Activated T-helper 2 cell treated with anti-CD3 and anti-CD28 coated beads, Interferon-gamma antibody, Interleukin-2, Interleukin-4, amounts not matched to agents 10 μg/mL and 5 μg/mL and 100 μg/mL, durations not matched to agents 14 hours and 24 hours and 36 hours (primary cell): ENCODE measurements at regions of chr1 and their contacts with region 1.

Region 1: GRCh38 chr1:204541626-204542025 is 25.4 kb downstream of the MDM4 start:
- DNase-seq: no peak
- H3K4me3 Mint-ChIP-seq: no peak overlapping the region
- H3K27ac Mint-ChIP-seq: no peak overlapping the region
- H3K4me1 Mint-ChIP-seq: peaks cover 53% of the 10 kb centered on the region
- H3K27me3 Mint-ChIP-seq: no peaks in the 10 kb centered on the region

Region 2: DNA sequence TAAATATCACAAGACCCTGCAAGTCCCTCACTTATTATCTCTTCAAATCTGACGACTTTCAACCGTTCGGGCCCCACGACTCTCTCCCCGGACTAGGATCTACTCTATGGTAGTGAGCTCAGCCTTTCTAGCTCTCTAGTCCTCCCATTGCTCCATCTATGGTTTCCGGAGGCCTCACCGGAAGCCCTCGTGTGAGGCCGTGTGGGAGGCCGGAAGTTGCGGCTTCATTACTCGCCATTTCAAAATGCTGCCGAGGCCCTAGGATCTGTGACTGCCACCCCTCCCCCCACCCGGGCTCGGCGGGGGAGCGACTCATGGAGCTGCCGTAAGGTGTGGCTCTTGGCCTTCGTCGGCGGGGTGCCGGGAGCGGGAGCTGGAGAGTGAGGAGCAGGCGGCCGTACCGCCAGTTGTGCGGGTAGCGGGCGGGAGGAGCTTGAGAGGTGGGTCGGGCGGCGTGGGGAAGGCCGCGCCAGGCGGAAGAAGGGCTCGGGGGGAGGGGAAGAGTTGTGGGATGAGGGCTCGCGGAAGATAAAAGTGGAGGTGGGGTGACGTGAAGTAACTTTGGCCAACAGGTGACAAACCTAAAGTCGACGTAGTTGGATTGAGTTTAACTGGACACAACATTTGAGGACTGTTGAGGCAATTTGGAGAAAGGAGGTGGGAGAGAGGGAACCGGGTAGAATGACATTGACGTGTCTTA is 25.3 kb before region 1 on chr1 and contains the start of gene MDM4:
- intact Hi-C with region 1: loop called (anchors 2 kb)
- DNase-seq: peak; percentile 91
- H3K4me3 Mint-ChIP-seq: no peak within 1 kb of the TSS
- H3K27ac Mint-ChIP-seq: no peak within 1 kb of the TSS
- H3K4me1 Mint-ChIP-seq: peaks cover 49% of the 10 kb centered on the region
- H3K27me3 Mint-ChIP-seq: no peaks in the 10 kb centered on the region
- total RNA-seq, gene MDM4: 74.5 and 79.1 TPM in 2 replicates

Region 3: GRCh38 chr1:204591594-204592051 is 50.0 kb after region 1 on chr1:
- intact Hi-C with region 1: no loop called
- DNase-seq: no peak
- H3K4me3 Mint-ChIP-seq: no peak overlapping the region
- H3K27ac Mint-ChIP-seq: no peak overlapping the region
- H3K4me1 Mint-ChIP-seq: no peaks in the 10 kb centered on the region
- H3K27me3 Mint-ChIP-seq: no peaks in the 10 kb centered on the region